Transverse colon (tissue), 4 donors: ENCODE measurements at regions of chr4 and their contacts with region 1.

Region 1: GRCh38 chr4:82890901-82891706 is at the start of gene SEC31A:
- DNase-seq: peak; percentile 98
- H3K4me3 ChIP-seq: peak within 1 kb of the TSS; percentile 71 to 76 (median 75)
- H3K27ac ChIP-seq: peak within 1 kb of the TSS; percentile 96 to 98 (median 97)
- H3K4me1 ChIP-seq: peaks cover 10 to 37% (median 32%) of the 10 kb centered on the region in 4 donors
- H3K27me3 ChIP-seq: no peaks in the 10 kb centered on the region
- CTCF ChIP-seq: no peak
- EP300 ChIP-seq: peak; percentile 49
- POLR2A ChIP-seq: peak; percentile 98
- total RNA-seq, gene SEC31A: 144 to 214 (median 163) TPM

Region 2: DNA sequence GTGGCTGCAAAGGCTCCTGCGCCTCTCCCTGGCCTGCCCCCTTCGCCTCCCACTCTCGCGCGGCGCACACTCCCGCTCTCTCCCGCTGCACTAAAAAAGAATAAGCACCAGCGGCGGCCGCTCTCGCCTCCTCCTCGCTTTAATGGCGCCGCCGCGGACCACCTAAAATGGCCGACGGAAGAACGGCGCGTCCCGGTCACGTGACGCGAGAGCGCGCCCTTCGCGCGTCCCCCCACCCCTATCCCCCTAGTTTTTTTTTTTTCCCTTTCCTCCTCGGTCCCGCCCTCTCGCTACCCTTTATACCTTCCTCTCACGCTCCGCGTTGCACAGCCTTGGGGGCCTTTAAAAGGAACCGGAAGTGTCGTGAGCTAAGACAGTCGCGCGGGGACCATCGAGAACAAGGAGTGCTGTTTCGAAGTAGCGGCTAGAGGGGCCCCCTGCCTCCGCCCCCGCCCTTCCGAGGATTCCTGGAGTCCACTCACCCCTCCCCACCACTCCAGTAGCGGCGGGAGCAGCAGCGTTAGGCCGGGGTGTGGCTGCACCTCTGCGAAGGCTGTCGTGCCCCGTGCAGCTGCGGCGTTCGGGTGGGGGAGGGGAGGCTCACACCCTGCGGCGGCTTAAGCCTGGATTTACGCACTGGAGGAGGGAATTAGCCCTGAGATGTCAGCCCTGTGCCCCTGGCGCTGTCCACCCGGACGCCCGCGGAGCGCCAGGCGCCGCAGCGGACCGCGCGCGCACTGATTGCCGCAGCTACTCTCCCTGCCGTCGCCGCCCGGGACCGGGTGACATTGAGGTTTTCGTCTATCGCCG is 517.1 kb before region 1 on chr4 and contains the start of gene HNRNPD:
- in situ Hi-C with region 1: no loop called
- intact Hi-C with region 1: loop called (anchors 10 kb)
- DNase-seq: peak; percentile 98
- H3K4me3 ChIP-seq: peak within 1 kb of the TSS; percentile 77 to 97 (median 86)
- H3K27ac ChIP-seq: peak within 1 kb of the TSS; percentile 97 to 100 (median 99)
- H3K4me1 ChIP-seq: peaks cover 16 to 45% (median 34%) of the 10 kb centered on the region in 4 donors
- H3K27me3 ChIP-seq: no peaks in the 10 kb centered on the region
- CTCF ChIP-seq: peak in 1 of 5 experiments; percentile 29
- EP300 ChIP-seq: peak; percentile 44
- POLR2A ChIP-seq: peak; percentile 95
- total RNA-seq, gene HNRNPD: 61.4 to 213 (median 130) TPM

Region 3: GRCh38 chr4:82500106-82500965 is 390.8 kb before region 1 on chr4:
- in situ Hi-C with region 1: no loop called
- intact Hi-C with region 1: no loop called
- DNase-seq: no peak
- H3K4me3 ChIP-seq: no peak overlapping the region
- H3K27ac ChIP-seq: no peak overlapping the region
- H3K4me1 ChIP-seq: no peaks in the 10 kb centered on the region
- H3K27me3 ChIP-seq: no peaks in the 10 kb centered on the region
- CTCF ChIP-seq: no peak
- EP300 ChIP-seq: no peak
- POLR2A ChIP-seq: no peak

Region 4: DNA sequence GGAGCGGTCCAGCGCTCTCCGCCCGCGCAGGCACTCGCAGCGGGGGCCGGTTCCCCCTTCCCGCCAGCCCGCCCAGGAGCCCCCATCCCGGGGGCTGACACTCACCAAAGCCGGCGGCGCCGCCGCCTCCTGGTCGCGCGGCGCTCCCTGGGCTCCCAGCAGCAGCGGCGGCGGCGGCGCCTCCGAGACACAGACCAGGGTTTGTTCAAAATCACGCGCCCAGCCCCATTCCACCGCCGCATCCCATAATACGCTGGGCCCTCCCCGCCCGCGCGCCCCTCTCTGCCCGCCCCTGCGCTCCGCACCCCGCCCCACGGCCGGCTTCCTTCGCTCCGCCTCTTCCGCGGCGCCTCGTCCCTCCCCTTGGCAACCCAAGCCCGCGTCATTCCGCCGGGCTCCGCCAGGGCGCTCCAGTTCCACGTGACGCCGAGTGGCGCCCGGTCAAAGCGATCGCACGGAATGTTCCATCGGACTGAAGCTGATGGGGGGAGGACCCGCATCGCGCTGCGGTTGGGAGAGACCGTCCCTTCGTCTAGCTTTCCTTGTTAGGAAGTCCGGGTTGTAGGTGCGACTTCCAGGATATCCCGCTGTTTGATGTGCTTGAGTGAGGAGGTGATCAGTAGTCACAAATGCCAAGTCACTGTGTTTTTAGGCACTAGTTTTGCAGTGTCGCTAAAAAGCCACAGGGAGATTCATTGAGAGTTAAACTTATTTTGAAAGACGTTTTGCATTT is 121.7 kb after region 1 on chr4:
- in situ Hi-C with region 1: loop called in 1 of 4 experiments (anchors 10 kb)
- intact Hi-C with region 1: no loop called
- DNase-seq: peak; percentile 99
- H3K4me3 ChIP-seq: peak overlapping the region; percentile 87 to 98 (median 92)
- H3K27ac ChIP-seq: peak overlapping the region; percentile 95 to 98 (median 97)
- H3K4me1 ChIP-seq: peaks cover 18 to 29% (median 29%) of the 10 kb centered on the region in 4 donors
- H3K27me3 ChIP-seq: no peaks in the 10 kb centered on the region
- CTCF ChIP-seq: peak; percentile 45 to 89 (median 66)
- EP300 ChIP-seq: peak; percentile 53
- POLR2A ChIP-seq: peak; percentile 66

Region 5: DNA sequence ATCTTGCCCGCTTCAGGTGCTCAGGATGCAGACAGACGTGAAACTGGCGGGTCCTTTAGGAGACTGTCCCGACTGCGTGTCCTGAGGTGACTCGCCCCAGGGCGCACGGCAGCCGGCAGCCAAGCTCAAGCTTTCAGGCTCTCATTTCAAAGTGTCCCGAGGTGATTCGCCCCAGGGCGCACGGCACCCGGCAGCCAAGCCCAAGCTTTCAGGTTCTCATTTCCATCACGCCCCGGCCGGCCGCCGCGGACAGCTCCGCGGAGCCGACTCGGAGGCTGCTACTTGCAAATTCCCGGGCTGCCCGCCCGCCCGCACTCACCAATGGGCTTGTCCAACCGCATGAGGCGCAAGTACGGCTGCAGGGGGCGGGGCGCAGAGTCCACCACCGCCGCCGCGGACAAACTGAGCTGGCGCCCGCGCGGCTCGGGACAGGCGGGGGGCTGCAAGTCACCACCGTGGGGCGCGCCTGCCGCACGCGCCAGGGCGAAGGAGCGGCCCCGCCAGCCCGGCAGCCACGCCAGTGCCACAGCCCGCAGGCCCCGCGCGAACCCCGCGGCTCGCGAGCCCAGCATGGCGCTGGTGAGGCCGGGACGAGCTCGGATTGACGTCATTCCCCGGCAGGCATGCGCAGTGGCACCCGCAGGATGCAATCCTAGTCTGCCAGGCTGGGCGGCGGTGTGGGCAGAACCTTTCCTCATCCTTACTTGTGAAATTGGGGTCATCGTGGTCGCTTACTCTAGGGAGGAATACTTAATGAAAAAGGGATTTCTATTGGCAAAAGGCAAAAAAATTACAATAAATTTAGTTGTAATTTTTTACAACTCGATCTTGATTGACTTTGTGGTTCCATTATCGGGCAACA is 393.3 kb after region 1 on chr4 and contains the start of gene COQ2:
- in situ Hi-C with region 1: loop called in 2 of 4 experiments (anchors 25 kb)
- intact Hi-C with region 1: no loop called
- DNase-seq: peak; percentile 97
- H3K4me3 ChIP-seq: peak within 1 kb of the TSS; percentile 37 to 80 (median 60)
- H3K27ac ChIP-seq: peak within 1 kb of the TSS; percentile 92 to 96 (median 93)
- H3K4me1 ChIP-seq: peaks cover 5 to 37% (median 20%) of the 10 kb centered on the region in 4 donors
- H3K27me3 ChIP-seq: no peaks in the 10 kb centered on the region
- CTCF ChIP-seq: peak; percentile 14 to 55 (median 24)
- EP300 ChIP-seq: no peak
- POLR2A ChIP-seq: peak; percentile 53
- total RNA-seq, gene COQ2: 0.75 to 14.4 (median 12.2) TPM